ENCODE measurements at regions of chr20 and their contacts with region 1.

Region 1: GRCh38 chr20:50120897-50121693 is 8.1 kb upstream of the UBE2V1 start:
- DNase-seq: peak; percentile 79
- ATAC-seq: peak; percentile 74
- H3K4me3 Mint-ChIP-seq: no peak overlapping the region
- H3K27ac Mint-ChIP-seq: no peak overlapping the region
- H3K4me1 Mint-ChIP-seq: peaks cover 4% of the 10 kb centered on the region
- H3K27me3 Mint-ChIP-seq: no peaks in the 10 kb centered on the region

Region 2: DNA sequence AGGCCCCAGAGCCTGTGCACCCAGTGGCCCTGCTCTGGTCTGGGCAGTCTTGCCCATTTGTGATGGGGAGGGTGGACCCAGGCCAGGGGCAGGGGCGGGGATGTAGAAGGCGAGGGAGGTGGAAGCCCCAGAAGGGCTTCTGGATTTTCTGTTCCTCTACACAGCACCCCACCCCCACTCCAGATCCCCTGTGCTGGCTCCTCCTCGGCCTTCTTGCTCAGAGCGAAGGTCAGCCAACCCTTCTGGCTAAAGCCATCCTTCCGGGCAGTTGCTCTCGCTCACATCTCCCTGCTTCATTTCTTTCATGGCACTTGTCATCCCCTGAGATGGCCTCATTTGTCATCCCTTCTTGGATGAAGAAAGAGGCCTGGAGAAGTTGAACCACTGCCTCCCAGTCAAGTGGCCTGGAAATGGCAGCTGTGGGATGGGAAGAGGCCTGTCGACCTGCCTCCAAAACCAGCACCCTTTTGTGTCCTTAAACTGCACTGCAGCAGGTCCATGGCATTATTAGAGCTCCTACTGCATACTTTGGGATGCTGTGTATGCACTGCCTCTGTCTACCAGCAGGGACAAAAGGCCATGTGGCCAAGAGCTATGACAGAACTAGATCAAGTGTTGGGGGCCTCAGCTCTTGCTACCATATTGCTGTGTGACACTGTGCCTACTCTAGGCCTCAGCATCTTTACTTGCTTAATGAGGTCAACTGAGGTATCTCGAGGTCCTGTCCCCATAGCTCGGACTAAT is 12.6 kb after region 1 on chr20:
- CTCF ChIA-PET with region 1: interaction called, 18 read pairs
- POLR2A ChIA-PET with region 1: no interaction called
- intact Hi-C with region 1: no loop called
- DNase-seq: no peak
- ATAC-seq: no peak
- H3K4me3 Mint-ChIP-seq: no peak overlapping the region
- H3K27ac Mint-ChIP-seq: no peak overlapping the region
- H3K4me1 Mint-ChIP-seq: peaks cover 13% of the 10 kb centered on the region
- H3K27me3 Mint-ChIP-seq: no peaks in the 10 kb centered on the region

Region 3: GRCh38 chr20:50146732-50147662 is 25.9 kb after region 1 on chr20:
- CTCF ChIA-PET with region 1: interaction called, 10 read pairs
- POLR2A ChIA-PET with region 1: no interaction called
- intact Hi-C with region 1: no loop called
- DNase-seq: peak; percentile 87
- ATAC-seq: peak; percentile 99
- H3K4me3 Mint-ChIP-seq: peak overlapping the region; percentile 66
- H3K27ac Mint-ChIP-seq: peak overlapping the region; percentile 97
- H3K4me1 Mint-ChIP-seq: peaks cover 58% of the 10 kb centered on the region
- H3K27me3 Mint-ChIP-seq: no peaks in the 10 kb centered on the region

Region 4: DNA sequence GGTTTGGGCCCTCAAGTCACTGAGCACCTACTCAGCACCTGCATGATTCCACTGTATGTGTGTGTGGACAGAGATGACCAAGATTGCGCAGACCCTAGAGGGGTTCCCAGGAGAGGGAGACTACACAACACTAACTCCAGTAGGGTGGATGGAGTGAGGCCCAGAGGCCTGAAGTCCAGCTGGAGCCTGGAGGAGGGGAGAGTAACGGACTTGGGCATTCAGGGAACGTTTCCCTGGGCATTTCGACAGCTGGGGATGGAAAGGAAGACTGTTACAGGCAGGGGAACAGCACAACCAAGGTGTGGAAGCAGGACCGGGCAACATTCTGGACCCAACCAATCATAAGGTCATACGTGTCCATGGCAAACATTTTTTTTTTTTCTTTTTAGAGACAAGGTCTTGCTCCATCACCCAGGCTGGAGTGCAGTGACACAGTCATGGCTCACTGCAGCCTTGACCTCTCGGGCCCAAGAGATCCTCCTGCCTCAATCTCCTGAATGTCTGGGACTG is 58.5 kb after region 1 on chr20:
- CTCF ChIA-PET with region 1: interaction called, 58 read pairs
- POLR2A ChIA-PET with region 1: no interaction called
- intact Hi-C with region 1: loop called in 1 of 2 experiments (anchors 2 kb)
- DNase-seq: no peak
- ATAC-seq: no peak
- H3K4me3 Mint-ChIP-seq: no peak overlapping the region
- H3K27ac Mint-ChIP-seq: no peak overlapping the region
- H3K4me1 Mint-ChIP-seq: no peaks in the 10 kb centered on the region
- H3K27me3 Mint-ChIP-seq: peaks cover 8% of the 10 kb centered on the region

Region 5: DNA sequence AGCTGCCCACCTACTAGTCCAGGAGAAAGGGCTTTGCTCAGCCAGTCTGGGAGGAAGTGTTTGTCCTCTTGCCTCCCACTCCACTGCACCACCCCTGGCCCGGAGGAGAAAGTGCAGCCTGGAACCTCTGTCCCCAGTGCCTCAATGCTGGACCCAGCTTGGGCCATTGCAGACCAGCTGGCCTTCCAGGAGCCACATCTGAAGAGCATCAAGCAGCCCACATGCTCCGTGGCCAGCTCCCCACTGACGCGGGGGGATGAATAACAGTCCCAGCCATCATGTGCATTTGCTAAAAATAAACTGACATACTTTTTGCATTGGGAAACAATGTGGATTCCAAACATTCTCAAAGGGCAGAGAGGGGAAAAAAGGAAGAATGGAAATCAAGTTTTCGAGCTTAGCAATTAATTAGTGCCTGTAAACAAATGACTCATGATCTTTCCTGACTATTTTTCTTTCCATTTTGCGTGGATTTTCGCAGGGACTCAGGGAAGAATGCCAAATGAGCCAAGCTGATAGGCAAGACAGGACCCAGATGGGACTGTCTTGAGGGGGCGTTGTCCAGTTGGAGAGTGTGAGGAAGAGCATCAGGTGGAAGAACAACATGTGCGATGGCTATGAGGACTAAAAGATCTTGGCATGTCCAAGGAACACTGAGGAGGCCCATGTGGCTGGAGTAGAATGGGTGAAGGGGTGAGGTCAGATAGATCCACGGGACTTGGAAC is 103.6 kb after region 1 on chr20:
- CTCF ChIA-PET with region 1: no interaction called
- POLR2A ChIA-PET with region 1: no interaction called
- intact Hi-C with region 1: no loop called
- DNase-seq: no peak
- ATAC-seq: no peak
- H3K4me3 Mint-ChIP-seq: no peak overlapping the region
- H3K27ac Mint-ChIP-seq: no peak overlapping the region
- H3K4me1 Mint-ChIP-seq: peaks cover 12% of the 10 kb centered on the region
- H3K27me3 Mint-ChIP-seq: no peaks in the 10 kb centered on the region

Measured in activated CD4-positive, alpha-beta T cell treated with anti-CD3 and anti-CD28 coated beads for 36 hours (primary cell).